ENCODE measurements at regions of chr18 and their contacts with region 1.

Region 1: DNA sequence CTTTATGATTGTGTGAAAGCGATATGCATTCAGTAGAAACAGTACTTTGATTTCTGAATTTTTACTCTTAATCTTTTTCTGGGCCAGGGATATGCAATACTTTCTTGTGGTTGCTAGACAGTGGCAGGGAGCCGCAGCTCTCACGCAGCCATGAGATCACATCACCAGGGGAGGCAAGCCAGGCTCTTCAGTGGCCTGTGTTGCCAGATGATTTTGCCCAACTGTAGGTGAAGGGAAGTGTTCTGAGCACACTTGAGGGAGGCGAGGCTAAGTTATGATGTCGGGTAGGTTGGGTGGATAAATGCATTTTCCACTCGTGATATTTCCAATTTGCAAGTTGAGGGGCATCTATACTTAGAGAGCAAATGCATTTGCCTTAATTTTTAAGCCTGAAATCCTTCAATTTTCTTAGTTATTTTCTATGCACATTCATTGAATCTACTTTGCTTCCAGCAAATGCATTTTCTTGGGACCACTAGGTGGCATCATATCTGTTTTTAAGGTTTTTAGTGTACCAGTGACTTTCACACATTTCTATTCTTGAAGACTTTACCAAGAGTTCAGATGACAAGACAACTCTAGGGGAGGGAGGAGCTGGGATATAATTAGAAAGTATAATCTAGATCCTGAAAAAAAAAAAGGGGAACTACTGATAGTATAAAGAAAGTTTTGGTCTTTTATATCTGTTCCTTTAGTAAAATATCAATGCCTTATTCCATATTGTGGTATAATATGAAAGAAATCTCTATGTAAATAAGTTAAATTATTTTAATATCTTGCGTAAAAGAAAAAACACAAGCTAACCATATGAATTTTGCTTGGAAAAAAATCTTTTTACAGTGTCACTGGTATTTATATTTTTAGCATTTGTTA is 643.3 kb downstream of the SOCS6 start:
- DNase-seq: no peak
- H3K4me3 Mint-ChIP-seq: no peak overlapping the region
- H3K27ac Mint-ChIP-seq: no peak overlapping the region
- H3K4me1 Mint-ChIP-seq: peaks cover 6% of the 10 kb centered on the region
- H3K27me3 Mint-ChIP-seq: no peaks in the 10 kb centered on the region

Region 2: GRCh38 chr18:71784777-71785176 is 852.6 kb after region 1 on chr18:
- CTCF ChIA-PET with region 1: no interaction called
- intact Hi-C with region 1: loop called (anchors 1 kb)
- DNase-seq: peak; percentile 26
- H3K4me3 Mint-ChIP-seq: no peak overlapping the region
- H3K27ac Mint-ChIP-seq: no peak overlapping the region
- H3K4me1 Mint-ChIP-seq: no peaks in the 10 kb centered on the region
- H3K27me3 Mint-ChIP-seq: no peaks in the 10 kb centered on the region

Region 3: GRCh38 chr18:72086421-72086820 is 1154.2 kb after region 1 on chr18:
- CTCF ChIA-PET with region 1: no interaction called
- intact Hi-C with region 1: loop called (anchors 10 kb)
- DNase-seq: no peak
- H3K4me3 Mint-ChIP-seq: no peak overlapping the region
- H3K27ac Mint-ChIP-seq: no peak overlapping the region
- H3K4me1 Mint-ChIP-seq: peaks cover 2% of the 10 kb centered on the region
- H3K27me3 Mint-ChIP-seq: peaks cover 4% of the 10 kb centered on the region

Region 4: DNA sequence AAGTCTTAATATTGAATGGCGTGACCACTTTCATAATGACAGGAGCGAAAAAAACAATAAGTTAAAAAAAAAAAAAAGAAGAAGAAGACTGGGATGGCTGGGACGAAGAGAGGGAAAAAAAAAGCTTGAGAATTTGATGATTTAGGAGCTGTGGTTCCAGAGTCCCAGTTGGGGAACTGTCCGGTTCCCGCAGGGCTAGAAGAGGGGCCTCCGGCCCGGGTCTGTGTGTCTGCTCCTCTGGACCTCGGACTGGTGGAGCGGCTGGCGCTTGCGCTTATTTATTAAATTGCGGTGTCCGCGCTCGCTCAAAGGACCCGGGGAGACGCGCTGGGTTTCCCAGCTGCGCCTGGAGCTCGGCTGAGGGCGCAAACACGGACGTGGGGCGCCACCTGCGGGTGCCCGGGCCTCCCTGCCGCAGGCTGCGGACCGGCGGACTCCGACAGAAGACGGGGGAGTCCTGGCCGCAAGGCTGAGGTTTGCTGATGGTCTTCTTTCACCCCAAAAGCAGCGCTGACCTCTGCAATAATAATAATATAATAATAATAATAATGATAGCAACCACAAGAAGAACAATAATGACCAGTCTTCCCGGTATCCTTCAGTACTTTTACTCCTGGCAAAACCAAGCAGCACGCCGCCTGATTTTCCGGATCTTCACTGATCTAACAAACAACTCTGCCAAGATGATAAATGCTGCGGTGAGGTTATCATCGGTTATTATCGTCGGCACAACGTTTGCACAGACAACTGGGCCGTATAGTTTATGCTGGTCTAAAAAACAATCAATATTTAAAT is 1612.1 kb after region 1 on chr18 and contains the start of gene CBLN2:
- CTCF ChIA-PET with region 1: interaction called, 4 read pairs
- intact Hi-C with region 1: loop called (anchors 1 kb)
- DNase-seq: peak; percentile 55
- H3K4me3 Mint-ChIP-seq: no peak within 1 kb of the TSS
- H3K27ac Mint-ChIP-seq: no peak within 1 kb of the TSS
- H3K4me1 Mint-ChIP-seq: peaks cover 11% of the 10 kb centered on the region
- H3K27me3 Mint-ChIP-seq: peaks cover 38% of the 10 kb centered on the region
- total RNA-seq, gene CBLN2: not detected